ENCODE measurements at regions of chr21 and their contacts with region 1.

Region 1: DNA sequence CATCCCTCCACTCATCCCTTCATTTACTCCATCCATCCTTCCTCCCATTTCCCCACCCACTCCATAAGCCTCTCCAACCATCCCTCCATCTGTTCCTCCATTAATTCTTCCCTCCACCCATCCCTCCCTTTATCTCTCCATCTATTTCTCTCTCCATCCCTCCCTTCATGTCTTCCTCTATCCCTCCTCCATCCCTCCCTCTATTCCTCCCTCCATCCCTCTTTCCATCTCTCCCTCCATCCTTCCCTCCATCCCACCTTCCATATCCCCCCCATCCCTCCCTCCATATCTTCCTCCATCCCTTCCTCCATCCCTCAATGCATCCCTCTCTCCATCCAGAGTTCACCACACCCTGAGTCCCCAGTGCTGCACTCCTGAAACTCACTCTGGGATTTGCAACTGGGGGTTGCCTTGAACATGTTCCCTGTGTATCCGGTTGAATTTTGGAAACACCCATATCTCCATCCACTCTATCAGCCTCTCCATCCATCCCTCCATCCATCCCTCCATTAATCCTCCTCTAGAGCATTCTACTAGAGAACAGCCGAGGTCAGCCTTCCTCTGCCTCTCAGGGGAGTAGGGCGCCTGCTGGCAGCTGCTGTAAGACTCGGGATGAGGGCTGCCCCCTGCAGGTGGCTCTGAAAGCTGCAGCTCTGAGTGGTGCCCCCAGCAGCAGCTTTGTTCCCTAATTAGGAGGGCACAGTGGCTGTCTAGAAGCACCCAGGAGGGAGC is 39.4 kb downstream of the ABCG1 start:
- DNase-seq: peak; percentile 87
- H3K4me3 Mint-ChIP-seq: no peak overlapping the region
- H3K27ac Mint-ChIP-seq: no peak overlapping the region
- H3K4me1 Mint-ChIP-seq: peaks cover 7% of the 10 kb centered on the region
- H3K27me3 Mint-ChIP-seq: no peaks in the 10 kb centered on the region

Region 2: DNA sequence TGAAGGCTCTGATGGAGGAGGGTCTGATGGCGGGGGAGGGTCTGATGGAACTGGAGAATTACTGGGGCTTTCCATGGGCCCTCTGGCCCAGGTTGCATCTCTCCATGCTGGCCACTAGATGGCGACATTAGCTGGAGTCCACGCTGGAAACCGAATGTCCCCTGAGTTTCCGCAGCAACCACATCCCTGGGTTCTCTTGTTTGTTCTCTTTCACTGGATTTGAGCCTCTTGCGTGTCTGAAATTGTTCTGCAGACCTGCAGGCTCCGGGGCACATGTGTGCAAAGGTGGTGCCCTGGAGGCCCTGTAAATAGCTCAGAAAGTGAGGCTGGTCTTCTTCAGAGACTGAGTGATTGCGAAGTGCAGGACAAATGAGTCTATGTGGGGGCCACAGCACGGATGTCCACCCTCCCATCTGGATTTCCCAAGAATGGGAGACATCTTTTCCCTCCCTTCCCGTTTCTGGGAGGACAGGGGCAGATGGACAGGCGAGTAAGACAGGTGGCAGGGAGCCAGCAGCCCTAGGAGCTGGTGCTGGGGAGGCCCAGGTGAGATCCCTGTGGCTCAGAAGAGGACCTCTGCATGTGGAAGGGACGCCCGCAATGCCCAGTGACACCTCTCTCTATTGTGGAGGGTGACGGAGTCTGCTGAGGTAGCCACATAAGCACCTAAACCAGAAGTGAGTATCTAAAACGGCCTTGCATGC is 112.6 kb before region 1 on chr21:
- CTCF ChIA-PET with region 1: interaction called, 204 read pairs
- POLR2A ChIA-PET with region 1: interaction called, 6 read pairs
- intact Hi-C with region 1: loop called (anchors 1 kb)
- DNase-seq: peak; percentile 75
- H3K4me3 Mint-ChIP-seq: no peak overlapping the region
- H3K27ac Mint-ChIP-seq: no peak overlapping the region
- H3K4me1 Mint-ChIP-seq: peaks cover 3% of the 10 kb centered on the region
- H3K27me3 Mint-ChIP-seq: no peaks in the 10 kb centered on the region

Region 3: DNA sequence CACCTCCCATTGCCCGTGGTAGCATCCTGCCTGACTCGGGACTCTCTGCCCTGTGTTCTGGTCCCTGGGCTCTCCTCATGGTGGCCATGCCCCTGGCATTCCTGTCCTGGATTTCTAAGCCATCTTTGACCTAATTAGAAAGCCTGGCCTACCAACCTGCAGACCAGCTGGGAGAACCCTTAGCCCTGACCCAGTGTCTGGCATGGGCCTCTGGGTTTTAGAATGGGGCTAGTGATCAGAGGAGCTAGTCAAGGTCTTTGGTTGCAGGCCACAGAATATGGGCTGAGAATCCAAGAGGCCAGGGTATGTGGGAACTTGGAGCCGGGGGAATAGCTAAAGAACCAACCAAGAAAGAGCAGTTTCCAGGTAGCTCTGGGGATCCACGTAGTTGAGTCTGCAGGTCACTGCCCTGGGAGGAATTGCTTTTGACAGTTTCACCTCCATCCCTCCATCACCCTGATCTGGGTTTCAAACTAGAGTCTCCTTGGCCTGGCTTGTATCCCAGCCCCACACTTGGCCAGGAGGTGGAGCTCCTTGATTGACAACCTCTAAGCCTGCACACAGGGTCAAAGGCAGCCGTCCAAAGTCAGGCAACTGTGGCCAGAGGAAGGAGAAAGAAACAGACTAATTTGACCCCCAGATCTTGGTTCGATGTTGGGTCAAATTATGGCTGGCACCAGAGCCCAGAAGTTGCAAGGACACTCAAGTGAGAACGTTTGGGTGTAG is 94.1 kb before region 1 on chr21:
- CTCF ChIA-PET with region 1: interaction called, 139 read pairs
- POLR2A ChIA-PET with region 1: interaction called, 4 read pairs
- intact Hi-C with region 1: loop called (anchors 1 kb)
- DNase-seq: peak; percentile 76
- H3K4me3 Mint-ChIP-seq: no peak overlapping the region
- H3K27ac Mint-ChIP-seq: no peak overlapping the region
- H3K4me1 Mint-ChIP-seq: peaks cover 13% of the 10 kb centered on the region
- H3K27me3 Mint-ChIP-seq: no peaks in the 10 kb centered on the region

Region 4: DNA sequence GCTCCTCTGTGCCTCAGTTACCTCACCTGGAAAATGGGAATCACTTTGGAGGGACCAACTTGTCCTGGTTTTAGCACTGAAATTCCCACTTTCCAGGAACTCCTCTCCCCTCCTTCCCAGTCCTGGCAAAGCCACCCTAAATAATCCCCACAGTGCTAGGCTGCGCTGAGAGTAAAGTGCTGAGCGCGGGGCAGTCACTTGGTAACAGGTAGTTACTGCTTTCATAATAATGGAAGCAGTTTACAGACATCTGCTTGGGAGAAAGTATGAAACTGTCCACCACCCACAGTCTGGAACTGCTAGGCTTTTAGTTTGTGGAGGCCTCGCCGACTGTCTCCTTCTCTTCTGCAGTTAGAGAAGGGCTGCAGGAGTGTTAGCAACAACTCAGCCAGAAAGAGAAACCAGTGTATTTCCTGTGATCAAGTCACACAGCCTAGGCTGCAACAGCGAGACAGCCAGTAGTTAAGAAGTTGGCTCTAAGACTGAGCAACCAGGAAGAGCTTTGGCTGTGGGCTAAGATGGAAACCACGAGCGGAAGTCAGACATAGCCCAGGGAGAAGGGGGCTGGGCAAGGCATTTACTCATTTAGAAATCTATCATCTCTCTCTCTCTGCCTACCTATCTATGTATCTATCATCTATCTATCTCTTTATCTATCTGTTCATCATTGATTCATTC is 70.2 kb before region 1 on chr21:
- CTCF ChIA-PET with region 1: interaction called, 12 read pairs
- POLR2A ChIA-PET with region 1: no interaction called
- intact Hi-C with region 1: no loop called
- DNase-seq: peak; percentile 92
- H3K4me3 Mint-ChIP-seq: peak overlapping the region; percentile 60
- H3K27ac Mint-ChIP-seq: peak overlapping the region; percentile 96
- H3K4me1 Mint-ChIP-seq: peaks cover 62% of the 10 kb centered on the region
- H3K27me3 Mint-ChIP-seq: no peaks in the 10 kb centered on the region

Region 5: GRCh38 chr21:42220138-42220701 is 38.1 kb before region 1 on chr21:
- CTCF ChIA-PET with region 1: interaction called, 17 read pairs
- POLR2A ChIA-PET with region 1: interaction called, 4 read pairs
- intact Hi-C with region 1: no loop called
- DNase-seq: peak; percentile 80
- H3K4me3 Mint-ChIP-seq: peak overlapping the region; percentile 78
- H3K27ac Mint-ChIP-seq: peak overlapping the region; percentile 85
- H3K4me1 Mint-ChIP-seq: peaks cover 21% of the 10 kb centered on the region
- H3K27me3 Mint-ChIP-seq: no peaks in the 10 kb centered on the region

Region 6: DNA sequence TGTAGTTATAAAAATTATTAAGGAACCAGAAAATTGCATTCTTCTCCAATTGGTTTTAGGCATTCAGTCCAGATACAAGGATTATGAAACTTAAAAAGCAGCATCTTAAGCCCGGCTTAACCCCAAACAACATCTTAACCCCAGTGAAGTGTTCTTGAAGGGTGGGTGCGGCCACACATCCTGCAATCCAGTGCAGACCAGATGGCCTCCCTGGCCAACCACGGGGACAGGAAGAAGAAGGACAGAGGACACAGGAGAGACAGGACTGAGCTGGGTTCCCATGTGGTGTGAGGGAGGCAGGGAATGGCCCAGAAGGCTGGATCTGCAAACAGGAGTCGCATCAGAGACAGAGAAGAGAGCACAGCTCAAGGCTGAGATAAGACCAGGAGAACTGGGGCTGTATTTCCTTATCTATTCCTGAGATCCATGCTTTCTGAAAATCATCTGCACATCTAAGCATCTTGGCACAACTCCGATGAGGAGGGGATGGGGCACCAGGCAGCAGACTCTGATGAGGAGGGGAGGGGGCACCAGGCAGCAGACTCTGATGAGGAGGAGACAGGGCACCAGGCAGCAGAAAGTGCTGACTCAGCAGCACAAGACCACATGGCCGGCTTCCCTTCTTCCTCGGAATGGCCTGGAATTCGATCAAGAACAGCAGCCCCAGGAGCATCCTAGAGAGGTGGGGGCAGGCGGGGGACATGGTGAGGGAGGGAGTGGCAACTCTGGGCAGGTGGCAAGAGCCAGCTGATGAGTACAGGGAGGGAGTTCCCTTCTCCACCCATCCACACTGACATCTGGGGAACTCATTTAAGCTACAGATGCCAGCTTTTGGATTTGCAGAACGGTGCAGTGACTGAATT is 12.8 kb before region 1 on chr21:
- CTCF ChIA-PET with region 1: interaction called, 12 read pairs
- POLR2A ChIA-PET with region 1: no interaction called
- intact Hi-C with region 1: no loop called
- DNase-seq: no peak
- H3K4me3 Mint-ChIP-seq: no peak overlapping the region
- H3K27ac Mint-ChIP-seq: no peak overlapping the region
- H3K4me1 Mint-ChIP-seq: peaks cover 3% of the 10 kb centered on the region
- H3K27me3 Mint-ChIP-seq: no peaks in the 10 kb centered on the region

Region 7: GRCh38 chr21:42374864-42375492 is 116.7 kb after region 1 on chr21:
- CTCF ChIA-PET with region 1: no interaction called
- POLR2A ChIA-PET with region 1: no interaction called
- intact Hi-C with region 1: no loop called
- DNase-seq: peak; percentile 51
- H3K4me3 Mint-ChIP-seq: peak overlapping the region; percentile 63
- H3K27ac Mint-ChIP-seq: peak overlapping the region; percentile 95
- H3K4me1 Mint-ChIP-seq: peaks cover 33% of the 10 kb centered on the region
- H3K27me3 Mint-ChIP-seq: no peaks in the 10 kb centered on the region

Measured in activated CD4-positive, alpha-beta memory T cell treated with anti-CD3 and anti-CD28 coated beads for 36 hours (primary cell).